Caco-2 (cell line): ENCODE measurements at regions of chr17 and their contacts with region 1.

Region 1: DNA sequence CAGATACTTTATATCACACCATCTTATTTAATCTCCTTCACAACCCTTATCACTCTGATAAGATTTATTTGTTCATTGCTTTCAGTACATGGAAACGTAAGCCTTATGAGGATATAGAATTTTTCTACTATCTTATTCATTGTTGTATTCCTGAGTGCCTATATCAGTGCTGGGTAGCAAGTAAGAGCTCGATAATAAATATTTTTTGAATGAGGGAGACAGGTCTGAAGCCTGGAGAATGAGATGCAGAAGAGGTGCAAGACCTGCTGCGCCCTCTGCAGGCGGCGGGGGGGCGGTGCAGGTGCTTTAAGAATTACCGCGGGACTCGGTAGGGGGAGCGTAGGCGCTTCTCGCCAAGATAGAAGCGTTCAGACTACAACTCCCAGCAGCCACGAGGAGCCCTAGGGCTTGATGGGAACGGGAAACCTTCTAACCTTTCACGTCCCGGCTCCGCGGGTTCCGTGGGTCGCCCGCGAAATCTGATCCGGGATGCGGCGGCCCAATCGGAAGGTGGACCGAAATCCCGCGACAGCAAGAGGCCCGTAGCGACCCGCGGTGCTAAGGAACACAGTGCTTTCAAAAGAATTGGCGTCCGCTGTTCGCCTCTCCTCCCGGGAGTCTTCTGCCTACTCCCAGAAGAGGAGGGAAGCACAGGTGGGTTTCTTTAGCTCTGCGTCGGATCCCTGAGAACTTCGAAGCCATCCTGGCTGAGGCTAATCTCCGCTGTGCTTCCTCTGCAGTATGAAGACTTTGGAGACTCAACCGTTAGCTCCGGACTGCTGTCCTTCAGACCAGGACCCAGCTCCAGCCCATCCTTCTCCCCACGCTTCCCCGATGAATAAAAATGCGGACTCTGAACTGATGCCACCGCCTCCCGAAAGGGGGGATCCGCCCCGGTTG is at the start of gene WRAP53:
- DNase-seq: peak; percentile 92 to 94
- H3K4me3 ChIP-seq: peak within 1 kb of the TSS; percentile 82
- H3K4me3 Mint-ChIP-seq: peak within 1 kb of the TSS; percentile 91
- H3K27ac Mint-ChIP-seq: peak within 1 kb of the TSS; percentile 100
- H3K4me1 ChIP-seq: 0 out of 2 replicates have a peak, but pooled peaks cover 6% of the 10 kb centered on the region
- H3K4me1 Mint-ChIP-seq: no peaks in the 10 kb centered on the region
- H3K27me3 ChIP-seq: no peaks in the 10 kb centered on the region
- H3K27me3 Mint-ChIP-seq: no peaks in the 10 kb centered on the region
- CTCF ChIP-seq: peak; percentile 82 to 86
- total RNA-seq, gene WRAP53: 13.6 and 15.2 TPM in 2 replicates

Region 2: GRCh38 chr17:7435221-7435675 is 252.9 kb before region 1 on chr17 and contains the start of gene TMEM102:
- CTCF ChIA-PET with region 1: interaction called, 4 read pairs
- POLR2A ChIA-PET with region 1: no interaction called
- intact Hi-C with region 1: loop called (anchors 5 kb)
- DNase-seq: peak; percentile 92 to 94
- H3K4me3 ChIP-seq: peak within 1 kb of the TSS; percentile 55
- H3K4me3 Mint-ChIP-seq: peak within 1 kb of the TSS; percentile 81
- H3K27ac Mint-ChIP-seq: peak within 1 kb of the TSS; percentile 95
- H3K4me1 ChIP-seq: no peaks in the 10 kb centered on the region
- H3K4me1 Mint-ChIP-seq: peaks cover 6% of the 10 kb centered on the region
- H3K27me3 ChIP-seq: no peaks in the 10 kb centered on the region
- H3K27me3 Mint-ChIP-seq: no peaks in the 10 kb centered on the region
- CTCF ChIP-seq: no peak
- total RNA-seq, gene TMEM102: 2.9 and 3.7 TPM in 2 replicates

Region 3: GRCh38 chr17:7614422-7615264 is 73.5 kb before region 1 on chr17 and contains the start of gene FXR2:
- CTCF ChIA-PET with region 1: interaction called, 5 read pairs
- POLR2A ChIA-PET with region 1: interaction called, 11 read pairs
- intact Hi-C with region 1: no loop called
- DNase-seq: peak; percentile 96 to 97
- H3K4me3 ChIP-seq: peak within 1 kb of the TSS; percentile 57
- H3K4me3 Mint-ChIP-seq: peak within 1 kb of the TSS; percentile 98
- H3K27ac Mint-ChIP-seq: peak within 1 kb of the TSS; percentile 94
- H3K4me1 ChIP-seq: no peaks in the 10 kb centered on the region
- H3K4me1 Mint-ChIP-seq: peaks cover 20% of the 10 kb centered on the region
- H3K27me3 ChIP-seq: no peaks in the 10 kb centered on the region
- H3K27me3 Mint-ChIP-seq: no peaks in the 10 kb centered on the region
- CTCF ChIP-seq: peak; percentile 24 to 49
- total RNA-seq, gene FXR2: 20.5 and 25.3 TPM in 2 replicates

Region 4: GRCh38 chr17:7634384-7634783 is 53.8 kb before region 1 on chr17:
- CTCF ChIA-PET with region 1: interaction called, 5 read pairs
- POLR2A ChIA-PET with region 1: interaction called, 8 read pairs
- intact Hi-C with region 1: loop called (anchors 1 kb)
- DNase-seq: peak; percentile 64 to 68
- H3K4me3 ChIP-seq: no peak overlapping the region
- H3K4me3 Mint-ChIP-seq: no peak overlapping the region
- H3K27ac Mint-ChIP-seq: no peak overlapping the region
- H3K4me1 ChIP-seq: peaks cover 3% of the 10 kb centered on the region; the same call in 1 of the 2 replicates
- H3K4me1 Mint-ChIP-seq: no peaks in the 10 kb centered on the region
- H3K27me3 ChIP-seq: no peaks in the 10 kb centered on the region
- H3K27me3 Mint-ChIP-seq: no peaks in the 10 kb centered on the region
- CTCF ChIP-seq: peak; percentile 27 to 55

Region 5: GRCh38 chr17:7703584-7704479 is 15.7 kb after region 1 on chr17:
- CTCF ChIA-PET with region 1: interaction called, 12 read pairs
- POLR2A ChIA-PET with region 1: interaction called, 3 read pairs
- intact Hi-C with region 1: no loop called
- DNase-seq: peak; percentile 44 to 59
- H3K4me3 ChIP-seq: no peak overlapping the region
- H3K4me3 Mint-ChIP-seq: peak overlapping the region; percentile 73
- H3K27ac Mint-ChIP-seq: peak overlapping the region; percentile 84
- H3K4me1 ChIP-seq: no peaks in the 10 kb centered on the region
- H3K4me1 Mint-ChIP-seq: no peaks in the 10 kb centered on the region
- H3K27me3 ChIP-seq: no peaks in the 10 kb centered on the region
- H3K27me3 Mint-ChIP-seq: no peaks in the 10 kb centered on the region
- CTCF ChIP-seq: no peak

Region 6: GRCh38 chr17:7940034-7940433 is 251.9 kb after region 1 on chr17:
- CTCF ChIA-PET with region 1: no interaction called
- POLR2A ChIA-PET with region 1: no interaction called
- intact Hi-C with region 1: no loop called
- DNase-seq: no peak
- H3K4me3 ChIP-seq: no peak overlapping the region
- H3K4me3 Mint-ChIP-seq: no peak overlapping the region
- H3K27ac Mint-ChIP-seq: no peak overlapping the region
- H3K4me1 ChIP-seq: no peaks in the 10 kb centered on the region
- H3K4me1 Mint-ChIP-seq: no peaks in the 10 kb centered on the region
- H3K27me3 ChIP-seq: no peaks in the 10 kb centered on the region
- H3K27me3 Mint-ChIP-seq: no peaks in the 10 kb centered on the region
- CTCF ChIP-seq: no peak

Region 7: GRCh38 chr17:7982666-7983065 is 294.5 kb after region 1 on chr17:
- CTCF ChIA-PET with region 1: no interaction called
- POLR2A ChIA-PET with region 1: no interaction called
- intact Hi-C with region 1: no loop called
- DNase-seq: no peak
- H3K4me3 ChIP-seq: no peak overlapping the region
- H3K4me3 Mint-ChIP-seq: no peak overlapping the region
- H3K27ac Mint-ChIP-seq: no peak overlapping the region
- H3K4me1 ChIP-seq: no peaks in the 10 kb centered on the region
- H3K4me1 Mint-ChIP-seq: no peaks in the 10 kb centered on the region
- H3K27me3 ChIP-seq: no peaks in the 10 kb centered on the region
- H3K27me3 Mint-ChIP-seq: no peaks in the 10 kb centered on the region
- CTCF ChIP-seq: no peak